H1 (cell line): ENCODE measurements at regions of chr9 and their contacts with region 1.

Region 1: GRCh38 chr9:130701056-130702022 is 7.8 kb downstream of the EXOSC2 start:
- DNase-seq: peak in 1 of 2 experiments; percentile 93
- H3K4me3 ChIP-seq: no peak overlapping the region
- H3K27ac ChIP-seq: 0 out of 2 replicates have a peak overlapping the region, but pooled peaks have one; percentile 2
- H3K4me1 ChIP-seq: no peaks in the 10 kb centered on the region; a peak in 1 of 7 replicates
- H3K27me3 ChIP-seq: no peaks in the 10 kb centered on the region
- CTCF ChIP-seq: peak; percentile 87 to 98 (median 97)
- EP300 ChIP-seq: no peak
- POLR2A ChIP-seq: no peak
- RAD21 ChIP-seq: peak; percentile 75 to 79

Region 2: DNA sequence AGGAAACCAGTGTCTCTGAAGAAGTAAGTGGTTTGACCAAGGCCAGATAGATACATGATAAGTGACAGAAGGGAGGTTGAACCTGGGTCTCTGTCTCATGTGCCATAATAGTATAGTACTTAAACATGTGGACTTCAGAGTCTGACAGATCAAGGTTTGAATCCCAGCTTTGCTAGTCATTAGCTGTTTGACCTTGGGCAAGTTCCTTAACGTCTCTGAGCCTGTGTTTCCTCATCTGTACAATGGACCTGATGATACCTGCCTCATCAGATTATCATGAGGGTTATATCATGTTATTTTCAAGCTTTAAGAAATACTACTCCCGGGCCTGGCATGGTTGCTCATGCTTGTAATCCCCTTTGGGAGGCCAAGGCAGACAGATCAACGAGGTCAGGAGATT is 97.0 kb before region 1 on chr9:
- CTCF ChIA-PET with region 1: no interaction called
- POLR2A ChIA-PET with region 1: no interaction called
- DNase-seq: no peak
- H3K4me3 ChIP-seq: no peak overlapping the region
- H3K27ac ChIP-seq: no peak overlapping the region
- H3K4me1 ChIP-seq: peaks cover 2 to 6% (median 4%) of the 10 kb centered on the region in 4 experiments; a peak in 6 of 7 replicates
- H3K27me3 ChIP-seq: no peaks in the 10 kb centered on the region
- CTCF ChIP-seq: no peak
- EP300 ChIP-seq: no peak
- POLR2A ChIP-seq: no peak
- RAD21 ChIP-seq: no peak

Region 3: GRCh38 chr9:130712564-130713285 is 11.4 kb after region 1 on chr9:
- CTCF ChIA-PET with region 1: interaction called, 29 read pairs
- POLR2A ChIA-PET with region 1: interaction called, 8 read pairs
- DNase-seq: peak; percentile 95
- H3K4me3 ChIP-seq: peak overlapping the region; percentile 68 to 86 (median 76)
- H3K27ac ChIP-seq: peak overlapping the region; percentile 96
- H3K4me1 ChIP-seq: peaks cover 2 to 9% (median 3%) of the 10 kb centered on the region in 4 experiments; a peak in 4 of 7 replicates
- H3K27me3 ChIP-seq: no peaks in the 10 kb centered on the region
- CTCF ChIP-seq: no peak
- EP300 ChIP-seq: no peak
- POLR2A ChIP-seq: peak in 1 of 2 experiments; percentile 85; a peak in 2 of 3 replicates
- RAD21 ChIP-seq: peak in 1 of 2 experiments; percentile 14; a peak in 1 of 4 replicates

Region 4: GRCh38 chr9:130732131-130732530 is 30.8 kb after region 1 on chr9:
- CTCF ChIA-PET with region 1: interaction called, 22 read pairs
- POLR2A ChIA-PET with region 1: interaction called, 4 read pairs
- DNase-seq: no peak
- H3K4me3 ChIP-seq: no peak overlapping the region
- H3K27ac ChIP-seq: no peak overlapping the region
- H3K4me1 ChIP-seq: no peaks in the 10 kb centered on the region; a peak in 1 of 7 replicates
- H3K27me3 ChIP-seq: peaks cover 0 to 1% (median 0%) of the 10 kb centered on the region in 4 experiments; a peak in 1 of 7 replicates
- CTCF ChIP-seq: peak in 1 of 3 experiments; percentile 38; a peak in 1 of 4 replicates
- EP300 ChIP-seq: no peak
- POLR2A ChIP-seq: no peak
- RAD21 ChIP-seq: 0 out of 4 replicates have a peak, but pooled peaks of 1 of the 2 experiments have one; percentile 2

Region 5: GRCh38 chr9:130854092-130854491 is 152.8 kb after region 1 on chr9:
- CTCF ChIA-PET with region 1: interaction called, 10 read pairs
- POLR2A ChIA-PET with region 1: interaction called, 6 read pairs
- DNase-seq: no peak
- H3K4me3 ChIP-seq: no peak overlapping the region
- H3K27ac ChIP-seq: no peak overlapping the region
- H3K4me1 ChIP-seq: no peaks in the 10 kb centered on the region
- H3K27me3 ChIP-seq: no peaks in the 10 kb centered on the region
- CTCF ChIP-seq: no peak
- EP300 ChIP-seq: no peak
- POLR2A ChIP-seq: no peak
- RAD21 ChIP-seq: no peak

Region 6: DNA sequence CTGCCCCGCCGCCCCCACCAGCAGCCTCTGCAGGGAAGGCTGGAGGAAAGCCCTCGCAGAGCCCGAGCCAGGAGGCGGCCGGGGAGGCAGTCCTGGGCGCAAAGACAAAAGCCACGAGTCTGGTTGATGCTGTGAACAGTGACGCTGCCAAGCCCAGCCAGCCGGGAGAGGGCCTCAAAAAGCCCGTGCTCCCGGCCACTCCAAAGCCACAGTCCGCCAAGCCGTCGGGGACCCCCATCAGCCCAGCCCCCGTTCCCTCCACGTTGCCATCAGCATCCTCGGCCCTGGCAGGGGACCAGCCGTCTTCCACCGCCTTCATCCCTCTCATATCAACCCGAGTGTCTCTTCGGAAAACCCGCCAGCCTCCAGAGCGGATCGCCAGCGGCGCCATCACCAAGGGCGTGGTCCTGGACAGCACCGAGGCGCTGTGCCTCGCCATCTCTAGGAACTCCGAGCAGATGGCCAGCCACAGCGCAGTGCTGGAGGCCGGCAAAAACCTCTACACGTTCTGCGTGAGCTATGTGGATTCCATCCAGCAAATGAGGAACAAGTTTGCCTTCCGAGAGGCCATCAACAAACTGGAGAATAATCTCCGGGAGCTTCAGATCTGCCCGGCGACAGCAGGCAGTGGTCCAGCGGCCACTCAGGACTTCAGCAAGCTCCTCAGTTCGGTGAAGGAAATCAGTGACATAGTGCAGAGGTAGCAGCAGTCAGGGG is 183.8 kb after region 1 on chr9:
- CTCF ChIA-PET with region 1: interaction called, 10 read pairs
- POLR2A ChIA-PET with region 1: no interaction called
- DNase-seq: no peak
- H3K4me3 ChIP-seq: no peak overlapping the region
- H3K27ac ChIP-seq: no peak overlapping the region; the same call in 1 of the 2 replicates
- H3K4me1 ChIP-seq: no peaks in the 10 kb centered on the region
- H3K27me3 ChIP-seq: no peaks in the 10 kb centered on the region
- CTCF ChIP-seq: no peak
- EP300 ChIP-seq: no peak
- POLR2A ChIP-seq: no peak
- RAD21 ChIP-seq: no peak

Region 7: DNA sequence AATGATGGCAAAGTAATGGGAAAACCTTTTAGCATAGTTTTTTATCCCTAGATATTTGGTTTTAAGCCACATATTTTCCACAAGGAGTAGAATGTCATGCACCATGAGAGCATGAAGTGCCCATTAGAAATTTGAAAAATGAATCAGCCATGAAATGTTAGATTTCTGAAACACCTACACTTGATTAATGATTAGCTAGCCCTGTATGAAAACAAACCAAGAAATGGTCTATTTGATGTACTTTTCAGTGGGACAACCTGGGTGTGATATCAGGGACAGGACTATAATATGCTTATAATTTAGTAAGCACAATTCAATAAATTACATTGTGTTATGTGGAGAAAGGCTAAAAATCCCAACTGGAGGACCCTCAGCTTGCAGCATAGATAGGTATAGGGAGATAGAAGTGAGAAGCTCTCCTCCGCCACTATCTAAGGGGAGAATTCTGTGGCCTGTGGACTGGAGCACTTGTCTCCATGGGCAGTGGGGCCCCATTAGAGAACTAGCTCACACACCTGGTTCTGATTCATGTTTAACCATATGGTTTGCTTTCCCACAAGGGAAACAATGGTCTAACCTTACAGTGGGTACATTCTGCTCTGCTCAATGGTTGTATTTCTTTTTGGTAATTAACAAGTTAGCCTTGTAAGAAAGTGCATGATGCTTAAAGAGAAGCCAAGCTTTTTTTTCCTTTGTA is 459.2 kb after region 1 on chr9:
- CTCF ChIA-PET with region 1: no interaction called
- POLR2A ChIA-PET with region 1: no interaction called
- DNase-seq: no peak
- H3K4me3 ChIP-seq: no peak overlapping the region
- H3K27ac ChIP-seq: no peak overlapping the region
- H3K4me1 ChIP-seq: no peaks in the 10 kb centered on the region
- H3K27me3 ChIP-seq: no peaks in the 10 kb centered on the region
- CTCF ChIP-seq: no peak
- EP300 ChIP-seq: no peak
- POLR2A ChIP-seq: no peak
- RAD21 ChIP-seq: no peak